HEK293 (cell line): ENCODE measurements at regions of chr19 and their contacts with region 1.

Region 1: GRCh38 chr19:30682999-30683536 is 310.9 kb downstream of the ZNF536 start:
- H3K4me3 ChIP-seq: no peak overlapping the region
- H3K27ac ChIP-seq: no peak overlapping the region
- H3K4me1 ChIP-seq: peaks cover 3% of the 10 kb centered on the region; the same call in 1 of the 2 replicates
- CTCF ChIP-seq: peak; percentile 90

Region 2: DNA sequence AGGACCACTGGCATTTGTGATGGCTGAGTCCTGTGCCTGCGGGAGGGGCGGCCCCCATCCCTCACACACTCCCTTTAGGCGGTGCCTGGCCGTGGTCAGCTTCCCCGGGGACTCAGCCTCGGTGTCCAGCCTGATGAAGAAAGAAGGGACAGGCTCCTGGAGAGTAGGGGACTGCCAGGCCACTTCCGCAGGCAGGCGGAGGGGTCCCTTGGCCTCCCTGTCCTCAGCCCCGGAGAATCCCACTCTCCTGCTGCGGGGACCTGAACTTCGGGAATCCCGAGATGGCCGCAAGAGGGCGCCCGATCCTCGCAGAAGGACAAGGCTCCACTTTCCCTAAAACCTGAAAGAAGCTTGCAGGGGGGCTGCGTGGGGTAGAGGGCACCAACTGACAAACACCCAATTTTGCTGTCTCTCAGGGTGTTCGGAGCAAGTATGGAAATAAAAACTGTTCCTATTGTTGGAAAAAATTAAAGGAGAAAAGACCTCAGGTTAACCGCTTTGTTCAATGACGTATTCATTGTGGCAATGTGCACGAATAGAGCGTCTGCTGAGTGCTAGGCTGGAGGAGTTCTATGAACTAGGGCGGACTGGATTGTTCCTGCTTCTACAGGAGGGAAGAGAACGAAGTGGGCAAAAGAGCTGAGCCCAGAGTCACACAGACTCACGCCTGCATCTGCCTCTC is 13.6 kb before region 1 on chr19:
- CTCF ChIA-PET with region 1: interaction called, 225 read pairs
- POLR2A ChIA-PET with region 1: interaction called, 3 read pairs
- H3K4me3 ChIP-seq: no peak overlapping the region
- H3K27ac ChIP-seq: no peak overlapping the region
- H3K4me1 ChIP-seq: peaks cover 15% of the 10 kb centered on the region
- CTCF ChIP-seq: peak; percentile 92

Region 3: GRCh38 chr19:30719189-30719998 is 36.3 kb after region 1 on chr19:
- CTCF ChIA-PET with region 1: interaction called, 16 read pairs
- POLR2A ChIA-PET with region 1: no interaction called
- H3K4me3 ChIP-seq: peak overlapping the region; percentile 14
- H3K27ac ChIP-seq: peak overlapping the region; percentile 16; the same call in 1 of the 2 replicates
- H3K4me1 ChIP-seq: peaks cover 20% of the 10 kb centered on the region
- CTCF ChIP-seq: no peak

Region 4: GRCh38 chr19:30784850-30785457 is 101.9 kb after region 1 on chr19:
- CTCF ChIA-PET with region 1: interaction called, 12 read pairs
- POLR2A ChIA-PET with region 1: no interaction called
- H3K4me3 ChIP-seq: no peak overlapping the region
- H3K27ac ChIP-seq: no peak overlapping the region
- H3K4me1 ChIP-seq: no peaks in the 10 kb centered on the region
- CTCF ChIP-seq: peak; percentile 92

Region 5: DNA sequence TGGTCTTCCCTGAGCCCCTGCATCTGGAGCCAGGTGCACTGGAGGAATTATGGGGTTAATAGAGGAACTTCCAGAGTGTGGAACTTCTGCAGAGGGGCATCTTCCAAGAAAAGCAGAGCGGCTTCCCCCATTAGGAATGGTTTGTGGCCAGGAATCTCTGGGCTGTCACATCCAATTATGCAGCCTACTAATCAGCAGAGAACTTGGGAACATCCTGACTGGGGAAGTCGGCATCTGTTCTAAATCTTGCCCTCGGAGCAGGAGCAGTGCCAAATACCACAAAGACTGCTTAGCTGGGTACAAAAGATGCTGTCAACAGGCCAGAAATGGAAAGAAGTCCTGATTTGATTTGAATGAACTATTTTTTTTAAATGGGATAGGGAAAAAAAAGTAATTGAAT is 124.2 kb after region 1 on chr19:
- CTCF ChIA-PET with region 1: interaction called, 15 read pairs
- POLR2A ChIA-PET with region 1: no interaction called
- H3K4me3 ChIP-seq: no peak overlapping the region
- H3K27ac ChIP-seq: no peak overlapping the region
- H3K4me1 ChIP-seq: no peaks in the 10 kb centered on the region; the same call in 1 of the 2 replicates
- CTCF ChIP-seq: no peak

Region 6: DNA sequence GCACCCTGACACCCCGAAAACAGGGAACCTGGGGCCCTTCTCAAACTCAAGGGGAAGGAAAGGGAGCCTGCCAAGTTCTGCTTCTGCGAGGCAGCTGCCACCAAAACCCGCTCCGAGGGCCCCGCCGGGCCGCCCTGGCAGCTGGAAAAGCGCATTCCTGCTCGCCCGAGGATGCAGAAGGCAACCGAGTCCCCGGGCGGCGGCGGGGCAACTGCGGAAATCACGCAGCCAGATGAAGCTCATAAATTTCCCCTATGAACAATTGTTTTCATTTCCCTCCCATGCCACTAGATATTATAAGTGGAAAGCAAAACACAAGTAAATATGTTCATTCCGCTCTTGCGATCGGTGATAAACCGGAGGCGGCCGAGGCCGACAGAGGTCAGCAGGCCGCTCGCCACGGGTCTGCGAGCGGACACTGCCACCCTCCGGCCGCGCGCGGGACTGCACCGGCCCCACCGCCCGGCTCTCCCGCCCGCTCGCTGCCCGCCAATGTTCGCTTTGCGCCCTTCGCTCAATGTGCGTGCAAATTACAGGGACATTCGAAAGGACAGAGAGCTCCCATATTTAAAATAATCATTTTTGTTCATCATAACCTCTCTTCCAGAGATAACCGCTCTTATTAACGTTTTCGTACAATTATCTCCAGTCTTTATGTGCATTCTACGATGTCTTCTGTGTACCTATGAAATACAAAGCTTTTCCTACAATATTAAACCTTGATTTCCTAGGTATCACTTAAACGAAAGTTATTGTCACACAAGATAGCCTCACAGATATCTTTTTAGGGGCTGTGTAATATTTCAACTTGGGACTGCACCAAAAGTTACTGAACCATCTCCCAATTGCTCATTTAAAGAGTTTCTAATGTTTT is 1541.5 kb after region 1 on chr19:
- CTCF ChIA-PET with region 1: interaction called, 37 read pairs
- POLR2A ChIA-PET with region 1: no interaction called
- H3K4me3 ChIP-seq: no peak overlapping the region
- H3K27ac ChIP-seq: no peak overlapping the region
- H3K4me1 ChIP-seq: peaks cover 10% of the 10 kb centered on the region
- CTCF ChIP-seq: peak; percentile 97